ENCODE measurements at regions of chr10 and their contacts with region 1.

Region 1: GRCh38 chr10:24349379-24350001 is 140.6 kb downstream of the KIAA1217 start:
- DNase-seq: no peak
- ATAC-seq: no peak
- H3K4me3 ChIP-seq: no peak overlapping the region
- H3K27ac ChIP-seq: no peak overlapping the region
- H3K4me1 ChIP-seq: peaks cover 0 to 22% (median 12%) of the 10 kb centered on the region in 3 donors
- H3K27me3 ChIP-seq: no peaks in the 10 kb centered on the region
- CTCF ChIP-seq: no peak

Region 2: DNA sequence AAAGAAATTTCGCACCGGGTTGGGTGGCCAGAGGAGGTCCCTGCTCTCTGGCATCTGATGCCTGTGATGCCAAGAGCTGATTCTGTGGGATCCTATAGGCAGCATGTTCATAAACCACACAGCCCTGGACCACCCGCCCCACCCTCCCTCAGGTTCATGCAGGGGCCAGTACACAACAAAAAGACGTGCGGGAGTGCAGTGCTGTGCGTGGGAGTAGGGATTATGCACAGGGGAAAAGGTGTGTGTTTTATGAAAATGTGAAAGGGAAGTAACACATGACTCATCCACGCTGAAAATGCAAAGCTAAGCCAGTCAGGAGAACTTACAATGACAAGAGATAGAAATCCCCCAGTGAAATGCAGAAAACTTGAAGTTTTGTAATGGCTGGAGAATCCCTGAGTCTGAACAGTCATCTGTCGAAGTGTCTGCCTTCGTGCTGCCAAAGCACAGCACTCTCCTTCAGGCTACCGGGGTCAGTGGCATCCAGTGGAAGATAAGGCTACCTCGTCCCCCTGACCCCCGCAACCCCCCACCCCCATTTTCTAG is 139.5 kb before region 1 on chr10:
- intact Hi-C with region 1: loop called in 1 of 3 experiments (anchors 10 kb)
- DNase-seq: peak in 1 of 6 donors; percentile 25
- ATAC-seq: peak in 2 of 4 donors; percentile 28 to 33
- H3K4me3 ChIP-seq: peak overlapping the region; percentile 28 to 59 (median 52)
- H3K27ac ChIP-seq: peak overlapping the region in 3 of 4 donors; percentile 83 to 92 (median 89)
- H3K4me1 ChIP-seq: peaks cover 5 to 12% (median 9%) of the 10 kb centered on the region in 3 donors
- H3K27me3 ChIP-seq: no peaks in the 10 kb centered on the region
- CTCF ChIP-seq: no peak

Region 3: DNA sequence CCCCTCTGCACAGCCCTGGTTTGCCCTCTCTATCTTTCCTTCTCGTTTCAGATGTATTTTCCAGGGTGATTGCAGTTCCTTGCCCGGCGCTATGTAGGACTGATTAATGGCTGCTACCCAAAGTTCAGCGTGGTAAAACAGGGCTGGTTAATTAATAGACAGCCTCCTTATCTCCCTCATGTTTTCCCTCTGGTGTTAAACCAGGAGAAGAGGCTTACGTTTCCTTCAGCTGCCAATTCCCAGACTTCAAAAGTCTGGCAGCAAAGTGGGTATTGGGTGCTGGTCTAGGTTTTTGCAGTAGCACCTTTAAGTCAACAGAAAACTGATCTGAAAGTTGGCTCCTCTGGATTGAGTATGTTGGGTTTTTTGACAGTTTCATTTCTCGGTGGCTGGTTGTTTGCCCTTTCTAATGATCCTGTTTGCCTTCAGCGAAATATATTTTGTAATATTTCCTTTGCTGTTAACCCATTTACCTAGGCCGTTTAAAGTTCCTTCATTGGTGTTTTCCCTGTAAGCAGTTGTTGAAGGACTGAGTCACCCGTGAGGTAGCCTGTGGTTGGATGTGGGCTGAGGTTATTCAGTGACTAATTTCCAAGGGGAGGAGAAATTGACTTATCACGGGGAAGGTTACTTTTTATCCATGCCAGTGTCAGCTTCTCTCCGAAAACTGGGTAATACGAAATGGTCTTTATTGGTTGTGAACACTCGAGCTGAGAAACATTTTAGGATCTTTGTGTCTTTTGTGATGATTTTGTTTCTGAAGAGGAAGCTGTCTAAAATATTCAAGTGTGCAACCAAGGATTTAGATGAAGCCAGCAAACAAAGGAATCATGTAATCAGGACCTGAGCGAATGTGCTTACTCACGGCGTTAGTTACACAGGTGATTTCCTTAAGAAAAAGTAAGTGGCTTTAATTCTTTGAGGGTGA is 116.7 kb after region 1 on chr10:
- intact Hi-C with region 1: loop called in 1 of 3 experiments (anchors 5 kb)
- DNase-seq: peak in 4 of 6 donors; percentile 34 to 81 (median 77)
- ATAC-seq: peak; percentile 77 to 85 (median 82)
- H3K4me3 ChIP-seq: peak overlapping the region; percentile 5 to 48 (median 31)
- H3K27ac ChIP-seq: peak overlapping the region; percentile 80 to 97 (median 86)
- H3K4me1 ChIP-seq: peaks cover 19 to 34% (median 26%) of the 10 kb centered on the region in 3 donors
- H3K27me3 ChIP-seq: no peaks in the 10 kb centered on the region
- CTCF ChIP-seq: no peak

Region 4: GRCh38 chr10:24483489-24484100 is 134.1 kb after region 1 on chr10:
- intact Hi-C with region 1: no loop called
- DNase-seq: peak in 3 of 6 donors; percentile 39 to 66 (median 49)
- ATAC-seq: peak; percentile 90 to 95 (median 92)
- H3K4me3 ChIP-seq: no peak overlapping the region
- H3K27ac ChIP-seq: peak overlapping the region; percentile 3 to 72 (median 35)
- H3K4me1 ChIP-seq: peaks cover 0 to 4% (median 0%) of the 10 kb centered on the region in 3 donors
- H3K27me3 ChIP-seq: no peaks in the 10 kb centered on the region
- CTCF ChIP-seq: no peak